Pancreas (tissue), 10 donors: ENCODE measurements at regions of chr9 and their contacts with region 1.

Region 1: GRCh38 chr9:120928483-120929228 is 2.1 kb upstream of the TRAF1 start:
- DNase-seq: peak; percentile 77 to 93 (median 82)
- ATAC-seq: peak; percentile 90 to 97 (median 95)
- H3K4me3 ChIP-seq: peak overlapping the region; percentile 76 to 87 (median 82)
- H3K27ac ChIP-seq: peak overlapping the region; percentile 81 to 94 (median 88)
- H3K4me1 ChIP-seq: peaks cover 0 to 4% (median 0%) of the 10 kb centered on the region in 3 donors
- H3K27me3 ChIP-seq: no peaks in the 10 kb centered on the region
- CTCF ChIP-seq: peak in 1 of 4 donors; percentile 26

Region 2: GRCh38 chr9:120032639-120033038 is 896.0 kb before region 1 on chr9:
- intact Hi-C with region 1: no loop called
- DNase-seq: no peak
- ATAC-seq: no peak
- H3K4me3 ChIP-seq: no peak overlapping the region
- H3K27ac ChIP-seq: no peak overlapping the region
- H3K4me1 ChIP-seq: no peaks in the 10 kb centered on the region
- H3K27me3 ChIP-seq: no peaks in the 10 kb centered on the region
- CTCF ChIP-seq: no peak

Region 3: DNA sequence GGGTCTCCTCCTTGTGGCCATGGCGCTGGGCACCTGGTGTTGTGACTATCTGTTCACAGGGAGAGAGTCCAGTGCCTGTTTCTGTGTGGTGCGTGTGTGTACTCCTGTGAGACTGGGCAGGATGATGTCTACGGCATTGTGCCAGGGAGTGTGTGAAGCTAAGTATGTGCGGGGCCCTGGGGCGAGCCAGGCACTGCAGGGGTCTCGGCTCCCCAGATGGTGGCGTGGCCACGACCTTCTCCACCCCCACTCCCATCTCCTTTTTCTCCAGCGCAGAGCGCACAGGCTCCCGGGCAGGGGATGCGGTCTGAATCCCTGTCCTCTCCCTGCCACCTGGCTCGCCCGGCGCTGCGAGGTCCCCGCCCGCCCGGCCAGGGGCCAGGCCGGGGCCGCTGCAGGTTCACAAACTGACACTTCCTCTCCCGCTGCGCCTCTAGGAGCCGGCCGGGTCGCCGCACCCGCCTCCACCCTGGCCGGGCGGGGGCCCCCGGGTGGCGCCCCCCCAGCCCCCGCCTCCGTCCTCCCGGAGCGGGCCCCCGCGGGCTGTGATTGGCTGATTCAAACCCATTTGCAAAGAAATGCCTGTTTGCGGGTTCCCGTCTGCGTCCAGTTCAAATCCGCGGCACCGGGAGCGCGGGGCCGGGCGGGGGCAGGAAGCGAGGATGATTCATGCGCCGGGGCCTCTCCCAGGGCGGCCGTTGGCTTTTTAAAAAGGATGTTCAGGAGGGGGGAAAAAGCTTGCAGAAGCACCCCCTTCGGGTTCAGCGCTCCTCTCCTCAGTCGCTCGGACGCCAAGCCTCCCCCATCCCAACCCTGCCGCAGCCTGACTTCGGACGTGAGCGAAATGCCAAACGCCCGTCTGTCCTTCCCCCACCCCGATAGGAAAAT is 52.5 kb before region 1 on chr9:
- intact Hi-C with region 1: loop called in 1 of 3 experiments (anchors 10 kb)
- DNase-seq: peak; percentile 46 to 84 (median 70)
- ATAC-seq: peak; percentile 76 to 83 (median 81)
- H3K4me3 ChIP-seq: peak overlapping the region; percentile 39 to 69 (median 48)
- H3K27ac ChIP-seq: peak overlapping the region; percentile 31 to 75 (median 62)
- H3K4me1 ChIP-seq: no peaks in the 10 kb centered on the region
- H3K27me3 ChIP-seq: no peaks in the 10 kb centered on the region
- CTCF ChIP-seq: no peak